ENCODE measurements at regions of chr1 and their contacts with region 1.

Region 1: GRCh38 chr1:24070821-24071393 is 41.0 kb downstream of the MYOM3 start:
- DNase-seq: peak; percentile 84
- ATAC-seq: peak; percentile 85 to 92

Region 2: GRCh38 chr1:23367791-23368561 is 702.9 kb before region 1 on chr1:
- intact Hi-C with region 1: no loop called
- DNase-seq: peak; percentile 99
- ATAC-seq: peak; percentile 90 to 94

Region 3: GRCh38 chr1:24111996-24112779 is 41.3 kb after region 1 on chr1 and contains the start of gene MYOM3:
- intact Hi-C with region 1: loop called in 1 of 2 experiments (anchors 1 kb)
- DNase-seq: peak; percentile 84
- ATAC-seq: peak; percentile 81 to 83
- total RNA-seq, gene MYOM3: 160 to 224 TPM

Region 4: GRCh38 chr1:24186993-24187805 is 116.3 kb after region 1 on chr1 and contains the start of gene IFNLR1:
- intact Hi-C with region 1: loop called in 1 of 2 experiments (anchors 10 kb)
- DNase-seq: peak; percentile 62
- ATAC-seq: peak; percentile 89 to 93
- total RNA-seq, gene IFNLR1: 4.0 to 5.9 TPM